Dorsolateral prefrontal cortex (tissue), 120 donors: ENCODE measurements at regions of chr16 and their contacts with region 1.

Region 1: DNA sequence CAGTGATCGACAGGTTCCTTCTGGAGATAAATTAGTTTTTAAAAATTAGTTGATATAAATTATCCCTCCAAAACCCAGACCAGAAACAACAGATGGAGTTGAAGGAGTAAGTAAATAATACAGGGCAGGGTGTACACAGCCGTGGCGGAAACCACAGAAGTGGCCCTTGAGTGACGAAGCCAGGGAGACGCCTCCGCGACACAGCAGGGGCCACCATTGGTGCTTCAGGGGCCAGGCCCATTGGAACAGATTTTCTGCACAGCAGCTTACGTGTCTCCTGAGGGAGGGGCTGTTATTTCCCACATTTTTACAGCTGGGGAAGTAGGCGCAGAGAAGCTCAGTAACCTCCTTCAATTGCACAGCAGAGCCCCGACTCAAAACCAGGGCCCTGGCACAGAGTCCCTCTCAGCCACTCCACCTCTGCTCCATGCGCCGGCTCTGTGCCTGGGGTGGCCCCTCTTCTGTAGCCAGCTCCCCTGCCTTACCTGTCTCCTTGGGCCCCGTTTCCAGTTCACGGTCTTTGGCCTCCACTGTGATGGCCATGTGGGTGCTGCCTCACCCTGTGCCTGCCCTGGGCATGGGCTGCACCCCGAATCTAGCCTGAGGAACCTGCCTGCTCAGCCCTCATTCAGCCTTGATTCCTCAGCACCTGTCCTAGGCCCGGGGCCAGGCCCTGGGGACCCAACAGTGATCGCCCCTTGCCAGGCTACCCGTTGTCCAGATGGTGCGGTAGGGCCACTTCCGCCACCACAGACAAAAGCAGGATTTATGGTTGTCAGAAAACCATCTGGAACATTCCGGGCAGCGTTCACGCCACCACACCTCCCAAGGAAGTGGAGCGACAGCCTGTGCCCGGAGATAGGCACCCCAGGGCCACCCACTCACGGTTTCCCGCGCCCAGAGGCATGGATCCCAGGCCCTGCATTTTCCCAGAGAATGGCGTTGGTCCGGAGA is 128.5 kb upstream of the GSE1 start:
- DNase-seq: peak in 1 of 10 donors; percentile 53
- H3K4me3 ChIP-seq: no peak overlapping the region
- H3K27ac ChIP-seq: peak overlapping the region in 26 of 59 donors; percentile 12 to 73 (median 34)
- H3K27me3 ChIP-seq: no peaks in the 10 kb centered on the region
- CTCF ChIP-seq: no peak

Region 2: DNA sequence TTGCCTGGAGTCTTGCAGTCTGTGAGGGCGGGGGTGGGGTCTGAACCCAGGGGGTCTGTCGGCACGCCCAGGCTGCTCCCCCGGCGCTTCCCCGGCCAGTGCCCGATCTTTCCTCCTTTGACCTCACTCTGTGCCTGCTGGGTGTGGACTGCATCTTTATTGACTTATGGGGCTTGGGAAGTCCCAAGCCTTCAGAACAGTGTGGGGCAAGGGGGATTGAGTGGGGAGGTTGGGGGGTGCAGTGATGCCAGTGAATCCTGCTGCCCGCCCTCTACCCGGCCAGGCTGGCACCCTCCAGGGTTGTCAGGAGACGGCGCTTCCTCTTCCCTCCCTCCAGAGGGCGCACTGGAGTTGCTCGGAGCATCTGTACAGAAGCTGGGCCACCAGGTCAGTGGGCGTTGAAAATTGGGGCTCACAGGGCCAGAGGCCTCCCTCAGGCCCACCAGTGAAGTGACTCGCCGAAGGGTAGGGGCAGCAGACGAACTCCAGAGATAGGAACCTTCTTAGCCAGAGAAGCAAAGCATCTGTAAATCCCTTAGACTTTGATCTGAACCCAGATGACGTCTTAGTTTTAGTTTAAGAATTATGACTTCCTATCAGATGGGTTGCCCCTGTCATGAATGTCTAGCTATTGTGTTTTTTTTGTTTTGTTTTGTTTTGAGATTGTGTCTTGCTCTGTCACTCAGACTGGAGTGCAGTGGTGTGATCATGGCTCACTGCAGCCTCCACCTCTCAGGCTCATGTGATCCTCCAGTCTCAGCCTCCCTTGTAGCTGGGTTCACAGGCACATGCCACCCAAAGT is 187.6 kb before region 1 on chr16:
- intact Hi-C with region 1: no loop called
- DNase-seq: peak in 1 of 10 donors; percentile 70
- H3K4me3 ChIP-seq: no peak overlapping the region
- H3K27ac ChIP-seq: peak overlapping the region in 1 of 59 donors; percentile 10
- H3K27me3 ChIP-seq: no peaks in the 10 kb centered on the region
- CTCF ChIP-seq: peak in 55 of 56 donors; percentile 41 to 84 (median 69)

Region 3: GRCh38 chr16:85384840-85385462 is 99.7 kb before region 1 on chr16:
- intact Hi-C with region 1: loop called in 1 of 2 experiments (anchors 5 kb)
- DNase-seq: peak in 3 of 10 donors; percentile 9 to 38 (median 38)
- H3K4me3 ChIP-seq: no peak overlapping the region
- H3K27ac ChIP-seq: peak overlapping the region in 1 of 59 donors; percentile 37
- H3K27me3 ChIP-seq: no peaks in the 10 kb centered on the region
- CTCF ChIP-seq: no peak

Region 4: GRCh38 chr16:85735225-85735635 is 250.6 kb after region 1 on chr16:
- intact Hi-C with region 1: no loop called
- DNase-seq: no peak
- H3K4me3 ChIP-seq: no peak overlapping the region
- H3K27ac ChIP-seq: no peak overlapping the region
- H3K27me3 ChIP-seq: no peaks in the 10 kb centered on the region
- CTCF ChIP-seq: no peak